ENCODE measurements at regions of chr5 and their contacts with region 1.

Region 1: GRCh38 chr5:81425569-81425968 is 31.6 kb upstream of the ACOT12 start:
- DNase-seq: no peak
- H3K4me3 ChIP-seq: no peak overlapping the region
- H3K27ac ChIP-seq: no peak overlapping the region
- H3K4me1 ChIP-seq: peaks cover 0 to 18% (median 9%) of the 10 kb centered on the region in 6 donors
- H3K27me3 ChIP-seq: no peaks in the 10 kb centered on the region
- CTCF ChIP-seq: peak in 10 of 11 experiments; percentile 20 to 72 (median 61)
- POLR2A ChIP-seq: no peak

Region 2: GRCh38 chr5:80720181-80720580 is 705.4 kb before region 1 on chr5:
- intact Hi-C with region 1: no loop called
- DNase-seq: no peak
- H3K4me3 ChIP-seq: no peak overlapping the region
- H3K27ac ChIP-seq: no peak overlapping the region
- H3K4me1 ChIP-seq: no peaks in the 10 kb centered on the region
- H3K27me3 ChIP-seq: no peaks in the 10 kb centered on the region
- CTCF ChIP-seq: no peak
- POLR2A ChIP-seq: no peak

Region 3: GRCh38 chr5:81838307-81838906 is 412.8 kb after region 1 on chr5:
- intact Hi-C with region 1: loop called (anchors 10 kb)
- DNase-seq: no peak
- H3K4me3 ChIP-seq: no peak overlapping the region
- H3K27ac ChIP-seq: no peak overlapping the region
- H3K4me1 ChIP-seq: peaks cover 0 to 6% (median 0%) of the 10 kb centered on the region in 6 donors
- H3K27me3 ChIP-seq: no peaks in the 10 kb centered on the region
- CTCF ChIP-seq: peak in 8 of 11 experiments; percentile 39 to 69 (median 50)
- POLR2A ChIP-seq: no peak

Measured in spleen (tissue), 13 donors.